Calu3 (cell line): ENCODE measurements at regions of chr7 and their contacts with region 1.

Region 1: DNA sequence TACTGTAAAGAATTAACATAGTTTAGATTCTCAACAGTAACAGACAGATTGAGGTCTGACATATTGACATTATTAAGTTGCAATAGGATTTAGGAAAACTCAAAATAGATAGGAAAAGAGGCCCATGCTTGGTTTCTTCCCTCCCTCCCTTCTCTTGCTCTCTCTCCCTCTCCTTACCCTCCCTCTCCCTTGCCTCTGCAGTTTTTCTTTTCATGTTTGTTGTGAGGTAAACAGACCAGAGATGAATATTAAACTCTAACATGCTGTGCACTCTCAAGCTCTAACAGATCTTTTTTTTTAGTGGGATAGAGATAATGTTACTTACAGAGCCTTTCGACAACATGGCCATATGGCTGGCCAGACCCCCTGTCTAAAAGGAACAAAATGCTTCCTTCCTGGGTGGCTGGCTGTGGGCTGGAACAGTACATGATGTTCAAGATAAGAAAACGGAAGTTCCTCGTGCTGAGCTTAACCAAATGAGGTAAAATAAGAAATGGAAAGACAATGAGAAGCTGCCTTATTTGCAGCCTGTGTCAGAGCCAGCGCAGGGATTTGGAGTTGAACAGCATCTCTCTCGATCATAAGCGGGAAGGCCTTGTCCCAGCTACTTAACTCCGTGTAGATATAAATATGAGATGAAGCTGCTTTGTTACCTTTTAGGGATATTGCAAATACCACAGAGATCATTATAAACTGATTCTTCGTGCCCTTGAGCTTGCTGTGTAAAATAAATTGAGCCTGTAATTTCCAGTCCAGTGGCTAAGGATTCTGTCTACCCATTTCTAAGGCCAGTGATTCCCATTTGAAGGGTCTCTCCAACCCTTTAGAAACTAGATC is 391.9 kb upstream of the NPVF start:
- DNase-seq: no peak
- H3K4me3 Mint-ChIP-seq: no peak overlapping the region
- H3K27ac Mint-ChIP-seq: no peak overlapping the region
- H3K4me1 Mint-ChIP-seq: no peaks in the 10 kb centered on the region
- H3K27me3 Mint-ChIP-seq: peaks cover 83% of the 10 kb centered on the region
- CTCF ChIP-seq: no peak

Region 2: GRCh38 chr7:25054819-25055519 is 565.2 kb before region 1 on chr7:
- CTCF ChIA-PET with region 1: no interaction called
- intact Hi-C with region 1: loop called (anchors 5 kb)
- DNase-seq: no peak
- H3K4me3 Mint-ChIP-seq: no peak overlapping the region
- H3K27ac Mint-ChIP-seq: no peak overlapping the region
- H3K4me1 Mint-ChIP-seq: peaks cover 8% of the 10 kb centered on the region
- H3K27me3 Mint-ChIP-seq: no peaks in the 10 kb centered on the region
- CTCF ChIP-seq: no peak

Region 3: GRCh38 chr7:25926009-25926408 is 305.8 kb after region 1 on chr7:
- CTCF ChIA-PET with region 1: no interaction called
- intact Hi-C with region 1: no loop called
- DNase-seq: peak; percentile 51
- H3K4me3 Mint-ChIP-seq: no peak overlapping the region
- H3K27ac Mint-ChIP-seq: no peak overlapping the region
- H3K4me1 Mint-ChIP-seq: no peaks in the 10 kb centered on the region
- H3K27me3 Mint-ChIP-seq: peaks cover 17% of the 10 kb centered on the region
- CTCF ChIP-seq: no peak